Activated T-helper 2 cell treated with anti-CD3 and anti-CD28 coated beads, Interferon-gamma antibody, Interleukin-2, Interleukin-4, amounts not matched to agents 10 μg/mL and 5 μg/mL and 100 μg/mL, durations not matched to agents 14 hours and 24 hours and 36 hours (primary cell): ENCODE measurements at regions of chr13 and their contacts with region 1.

Region 1: GRCh38 chr13:99250982-99251825 is 7.0 kb downstream of the GPR18 start:
- DNase-seq: no peak
- H3K4me3 Mint-ChIP-seq: no peak overlapping the region
- H3K27ac Mint-ChIP-seq: peak overlapping the region; percentile 34
- H3K4me1 Mint-ChIP-seq: peaks cover 47% of the 10 kb centered on the region
- H3K27me3 Mint-ChIP-seq: no peaks in the 10 kb centered on the region

Region 2: DNA sequence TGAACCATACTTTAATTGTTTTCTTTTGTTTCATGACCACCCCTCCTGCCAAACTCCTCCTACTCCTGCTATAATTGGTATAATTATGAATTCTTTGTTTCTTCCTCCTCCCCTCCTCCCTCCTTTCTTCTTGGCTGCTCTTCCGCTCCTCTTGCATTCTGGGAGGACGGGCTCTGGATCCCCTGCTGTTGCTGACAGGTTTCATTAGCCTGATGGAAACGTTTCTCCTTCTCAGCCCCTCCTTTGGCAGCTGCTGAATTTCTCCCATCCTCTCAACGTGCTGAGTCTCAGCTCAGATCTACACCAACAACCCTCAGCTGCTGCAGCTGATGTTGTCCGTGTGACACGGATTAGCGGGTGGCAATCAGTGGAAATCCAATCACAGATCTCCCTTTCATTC is 147.7 kb before region 1 on chr13:
- intact Hi-C with region 1: no loop called
- DNase-seq: no peak
- H3K4me3 Mint-ChIP-seq: no peak overlapping the region
- H3K27ac Mint-ChIP-seq: no peak overlapping the region
- H3K4me1 Mint-ChIP-seq: peaks cover 1% of the 10 kb centered on the region
- H3K27me3 Mint-ChIP-seq: peaks cover 15% of the 10 kb centered on the region

Region 3: DNA sequence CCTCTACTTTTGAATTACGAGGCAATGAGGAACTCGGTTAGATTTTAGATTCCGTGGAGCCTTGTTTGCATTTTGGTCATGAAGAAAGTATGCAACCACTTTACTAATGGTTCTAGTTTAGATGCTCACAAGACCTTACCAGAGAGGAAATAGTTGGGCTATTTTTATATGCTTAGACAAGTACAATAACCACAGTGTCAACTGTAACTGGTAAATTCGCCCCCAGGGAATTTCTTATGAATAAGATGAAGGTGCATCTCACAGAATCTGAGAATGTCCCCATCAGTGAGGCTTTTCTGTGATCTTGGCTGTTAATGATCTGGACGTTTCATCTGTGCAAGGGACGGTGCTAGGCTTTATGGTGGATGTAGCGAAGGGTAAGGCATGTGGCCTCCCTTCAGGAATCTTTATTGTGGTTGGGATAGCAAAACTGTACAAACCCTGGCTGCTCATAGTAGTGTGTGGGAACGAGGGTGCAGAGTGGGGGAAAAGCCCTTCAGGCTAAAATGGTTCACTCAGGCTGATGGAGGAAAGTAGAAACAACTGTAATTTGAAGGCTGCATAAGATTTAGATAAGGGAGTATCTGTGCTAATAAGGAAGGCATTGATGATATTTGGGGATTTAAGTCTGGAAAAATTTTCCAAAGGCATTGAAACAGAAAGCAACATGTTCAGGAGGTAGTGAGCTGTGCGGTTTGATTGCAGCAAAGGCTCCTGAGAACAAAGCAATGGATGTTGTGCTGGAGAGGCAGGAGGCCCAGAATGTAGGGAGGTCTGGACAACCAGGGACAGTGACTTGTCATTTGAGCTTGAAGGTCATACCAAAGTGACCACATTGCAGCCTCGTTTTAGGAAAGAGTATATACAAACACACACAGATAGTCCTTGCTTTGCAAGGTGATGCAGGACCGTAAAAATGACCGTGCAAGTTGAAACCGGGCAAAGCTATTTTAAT is 22.2 kb before region 1 on chr13:
- intact Hi-C with region 1: loop called (anchors 1 kb)
- DNase-seq: no peak
- H3K4me3 Mint-ChIP-seq: peak overlapping the region; percentile 66
- H3K27ac Mint-ChIP-seq: peak overlapping the region; percentile 94
- H3K4me1 Mint-ChIP-seq: peaks cover 54% of the 10 kb centered on the region
- H3K27me3 Mint-ChIP-seq: no peaks in the 10 kb centered on the region